BJ (cell line): ENCODE measurements at regions of chr20 and their contacts with region 1.

Region 1: DNA sequence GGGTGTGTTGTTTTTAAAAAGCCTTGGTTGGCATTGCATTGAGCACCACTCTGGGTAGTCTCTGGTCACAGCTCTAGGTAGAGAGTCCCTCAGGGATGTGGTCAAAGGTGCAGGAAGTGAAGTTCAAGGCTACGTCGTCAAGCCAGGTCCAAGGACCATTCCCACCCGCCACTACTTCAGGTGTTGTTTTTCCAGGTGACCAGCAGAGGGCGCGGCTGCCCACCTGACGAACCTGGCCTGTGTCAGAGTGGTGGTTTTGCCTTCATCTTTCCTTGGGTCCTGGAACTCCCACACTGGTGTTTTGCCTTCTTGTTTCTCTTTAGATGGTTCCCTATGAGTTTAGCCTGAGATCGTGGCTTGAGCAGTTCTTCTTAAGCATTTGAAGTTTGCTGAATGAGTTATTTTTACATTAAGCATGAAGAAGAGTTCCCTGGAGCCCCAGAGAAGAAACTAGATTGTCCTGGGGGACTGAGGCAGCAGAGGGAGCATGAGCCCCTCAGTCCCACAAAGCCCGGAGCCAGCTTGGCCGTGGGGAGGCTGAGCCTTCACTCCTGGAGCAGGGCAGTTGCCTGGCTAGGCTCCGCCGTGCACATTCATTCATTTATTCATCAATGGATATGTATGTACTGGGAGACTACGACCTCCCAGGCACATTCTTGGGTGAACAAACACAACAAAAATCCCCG is 5.6 kb upstream of the PHACTR3 start:
- DNase-seq: no peak
- H3K4me3 ChIP-seq: no peak overlapping the region
- H3K27me3 ChIP-seq: peaks cover 9% of the 10 kb centered on the region
- CTCF ChIP-seq: peak; percentile 79

Region 2: DNA sequence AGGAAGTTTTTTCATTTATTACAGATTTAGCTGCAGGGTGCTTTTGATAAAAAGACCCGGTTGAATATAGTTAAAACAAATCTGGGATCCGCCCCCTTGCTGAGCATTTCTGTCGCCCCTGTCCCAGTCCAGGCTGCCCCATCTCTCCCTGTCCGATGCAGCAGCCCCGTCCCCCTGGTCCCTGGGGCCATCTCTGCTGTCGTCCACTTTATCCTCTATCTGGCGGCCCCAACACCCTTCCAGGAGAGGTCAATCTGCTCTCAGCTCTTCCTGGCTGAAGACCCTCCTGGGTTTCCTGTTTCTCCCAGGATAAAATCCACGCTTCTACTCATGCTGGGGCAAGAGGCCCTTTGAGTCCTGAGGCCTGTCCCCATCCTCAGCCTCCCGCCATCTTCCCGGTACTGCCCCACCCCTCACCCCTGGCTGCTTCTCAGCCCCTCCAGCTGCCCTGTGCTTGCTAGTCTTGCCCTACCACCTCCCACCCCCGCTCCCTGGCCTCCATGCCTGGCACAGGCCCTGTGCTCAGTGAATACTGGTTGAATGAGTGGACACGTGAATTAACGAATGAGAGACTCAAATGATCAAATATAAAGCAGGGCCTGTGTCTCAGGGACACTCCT is 10.4 kb before region 1 on chr20:
- CTCF ChIA-PET with region 1: interaction called, 15 read pairs
- POLR2A ChIA-PET with region 1: no interaction called
- DNase-seq: no peak
- H3K4me3 ChIP-seq: no peak overlapping the region
- H3K27me3 ChIP-seq: no peaks in the 10 kb centered on the region
- CTCF ChIP-seq: no peak

Region 3: GRCh38 chr20:59751056-59751688 is 152.4 kb after region 1 on chr20:
- CTCF ChIA-PET with region 1: interaction called, 97 read pairs
- POLR2A ChIA-PET with region 1: no interaction called
- DNase-seq: peak; percentile 9
- H3K4me3 ChIP-seq: no peak overlapping the region
- H3K27me3 ChIP-seq: peaks cover 5% of the 10 kb centered on the region; the same call in 1 of the 2 replicates
- CTCF ChIP-seq: peak; percentile 91

Region 4: GRCh38 chr20:59835448-59836395 is 237.0 kb after region 1 on chr20:
- CTCF ChIA-PET with region 1: no interaction called
- POLR2A ChIA-PET with region 1: no interaction called
- DNase-seq: peak; percentile 5
- H3K4me3 ChIP-seq: no peak overlapping the region; the same call in 1 of the 2 replicates
- H3K27me3 ChIP-seq: peaks cover 2% of the 10 kb centered on the region
- CTCF ChIP-seq: no peak